ENCODE measurements at regions of chr5 and their contacts with region 1.

Region 1: DNA sequence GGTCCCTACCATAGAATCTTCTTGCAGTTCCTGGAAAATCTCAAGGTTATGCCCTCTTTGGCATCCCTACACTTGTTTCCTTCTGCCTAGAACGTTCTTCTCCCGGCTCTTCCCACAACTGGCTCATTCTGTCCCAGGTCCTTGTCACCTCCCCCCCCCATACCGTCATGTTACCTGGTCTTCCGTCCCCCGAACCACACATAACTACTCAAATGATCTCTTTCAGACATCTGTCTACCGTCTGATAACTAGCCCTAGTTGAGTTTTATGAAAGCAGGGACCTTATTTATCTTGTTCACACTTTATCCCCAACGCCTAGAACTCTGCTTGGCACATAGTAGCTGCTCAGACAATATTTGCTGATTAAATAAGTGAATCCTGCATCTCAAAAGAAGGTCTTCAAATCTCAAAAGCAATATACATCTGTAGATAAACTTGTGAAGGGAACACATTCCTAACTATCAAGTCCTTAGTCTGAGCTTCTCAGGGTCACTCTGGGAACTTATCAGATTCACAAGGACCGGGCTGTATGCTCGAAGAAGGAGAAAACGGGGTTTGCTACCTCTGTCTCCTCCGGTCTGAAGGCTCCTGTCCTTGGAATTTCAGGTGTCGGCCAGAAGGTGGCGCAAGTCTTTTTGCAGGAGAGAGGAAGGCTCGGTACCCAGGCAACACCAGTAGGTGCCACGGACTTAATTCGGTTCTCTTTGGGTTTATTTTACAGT is 30.0 kb downstream of the LCP2 start:
- DNase-seq: peak; percentile 34
- ATAC-seq: peak; percentile 99
- H3K4me3 ChIP-seq: no peak overlapping the region
- H3K27ac ChIP-seq: no peak overlapping the region; the same call in 1 of the 2 replicates
- H3K4me1 ChIP-seq: peaks cover 7% of the 10 kb centered on the region
- H3K27me3 ChIP-seq: no peaks in the 10 kb centered on the region
- CTCF ChIP-seq: peak; percentile 79 to 88 (median 84)
- EP300 ChIP-seq: no peak
- POLR2A ChIP-seq: no peak
- RAD21 ChIP-seq: peak; percentile 89

Region 2: GRCh38 chr5:170252720-170253350 is 14.8 kb before region 1 on chr5:
- CTCF ChIA-PET with region 1: interaction called, 21 read pairs
- POLR2A ChIA-PET with region 1: no interaction called
- RAD21 ChIA-PET with region 1: interaction called, 4 read pairs
- SMC1A ChIA-PET with region 1: interaction called, 11 read pairs
- in situ Hi-C with region 1: no loop called
- intact Hi-C with region 1: no loop called
- DNase-seq: no peak
- ATAC-seq: no peak
- H3K4me3 ChIP-seq: no peak overlapping the region
- H3K27ac ChIP-seq: no peak overlapping the region
- H3K4me1 ChIP-seq: no peaks in the 10 kb centered on the region
- H3K27me3 ChIP-seq: no peaks in the 10 kb centered on the region
- CTCF ChIP-seq: no peak
- EP300 ChIP-seq: no peak
- POLR2A ChIP-seq: no peak
- RAD21 ChIP-seq: no peak

Region 3: DNA sequence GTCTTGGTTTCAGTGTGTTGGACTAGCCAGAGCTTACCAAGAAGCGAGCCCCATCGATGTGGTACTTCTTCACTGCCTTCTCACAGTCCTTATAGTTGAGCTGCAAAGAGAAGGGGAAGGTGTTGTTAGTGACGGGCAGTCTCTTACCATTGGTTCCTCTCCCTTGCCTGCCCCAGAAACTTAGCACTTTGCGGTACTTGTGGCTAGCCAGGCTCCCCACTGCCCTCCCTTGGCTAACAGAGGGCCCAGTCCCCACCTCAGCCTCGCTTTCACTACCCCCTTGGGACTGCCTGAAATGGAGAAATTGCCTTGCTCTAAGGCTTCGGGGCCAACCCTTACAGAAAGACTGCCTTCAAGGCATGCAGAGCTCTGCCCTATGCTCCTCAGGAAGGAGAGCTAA is 25.7 kb after region 1 on chr5:
- CTCF ChIA-PET with region 1: interaction called, 85 read pairs
- POLR2A ChIA-PET with region 1: interaction called, 18 read pairs
- RAD21 ChIA-PET with region 1: interaction called, 182 read pairs
- SMC1A ChIA-PET with region 1: interaction called, 451 read pairs
- in situ Hi-C with region 1: no loop called
- intact Hi-C with region 1: no loop called
- DNase-seq: peak; percentile 87
- ATAC-seq: peak; percentile 86
- H3K4me3 ChIP-seq: peak overlapping the region; percentile 77
- H3K27ac ChIP-seq: no peak overlapping the region
- H3K4me1 ChIP-seq: peaks cover 15% of the 10 kb centered on the region
- H3K27me3 ChIP-seq: no peaks in the 10 kb centered on the region
- CTCF ChIP-seq: peak in 1 of 3 experiments; percentile 19; a peak in 1 of 6 replicates
- EP300 ChIP-seq: peak in 1 of 2 experiments; percentile 80; a peak in 2 of 4 replicates
- POLR2A ChIP-seq: no peak
- RAD21 ChIP-seq: peak; percentile 34; the same call in 1 of the 2 replicates

Region 4: DNA sequence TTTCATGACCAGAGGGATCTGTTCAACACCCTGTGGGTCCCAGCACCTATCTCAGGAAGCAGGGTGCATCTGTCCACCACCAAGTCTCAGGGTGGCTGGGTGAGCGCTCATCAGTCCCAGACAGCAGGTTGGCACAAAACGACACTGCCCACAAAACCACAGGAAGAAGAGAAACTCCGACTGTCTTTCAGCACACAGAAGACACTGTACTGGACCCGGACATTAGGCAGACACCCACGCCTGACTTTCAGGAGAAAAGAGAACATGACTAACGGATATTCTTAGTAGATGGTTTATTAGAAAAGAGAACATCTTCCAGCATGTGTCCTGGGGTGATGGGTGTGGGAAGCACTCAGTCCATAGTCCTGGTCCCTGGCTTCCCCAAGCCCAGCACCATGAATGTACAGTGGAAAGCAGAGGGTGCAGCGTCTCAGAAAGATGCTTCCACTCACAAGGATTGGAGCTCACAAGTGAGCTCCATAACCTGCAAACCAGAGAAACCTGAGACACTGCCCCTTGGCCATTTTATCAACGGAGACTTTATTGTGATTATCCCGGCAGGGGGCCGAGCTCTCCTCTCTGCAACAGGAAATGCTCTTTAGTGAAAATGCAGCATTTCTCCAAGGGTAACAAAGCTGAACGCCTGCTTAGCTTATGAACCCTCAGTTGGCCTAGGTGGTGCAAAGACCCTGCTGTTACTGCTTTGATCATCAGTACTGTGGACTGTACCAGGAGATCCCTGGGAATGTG is 65.7 kb after region 1 on chr5:
- CTCF ChIA-PET with region 1: interaction called, 189 read pairs
- POLR2A ChIA-PET with region 1: interaction called, 19 read pairs
- RAD21 ChIA-PET with region 1: interaction called, 88 read pairs
- SMC1A ChIA-PET with region 1: interaction called, 125 read pairs
- in situ Hi-C with region 1: no loop called
- intact Hi-C with region 1: no loop called
- DNase-seq: peak; percentile 79
- ATAC-seq: peak; percentile 54
- H3K4me3 ChIP-seq: no peak overlapping the region
- H3K27ac ChIP-seq: 0 out of 2 replicates have a peak overlapping the region, but pooled peaks have one; percentile 5
- H3K4me1 ChIP-seq: peaks cover 46% of the 10 kb centered on the region
- H3K27me3 ChIP-seq: no peaks in the 10 kb centered on the region
- CTCF ChIP-seq: no peak
- EP300 ChIP-seq: 0 out of 4 replicates have a peak, but pooled peaks of 1 of the 2 experiments have one; percentile 28
- POLR2A ChIP-seq: no peak
- RAD21 ChIP-seq: 0 out of 2 replicates have a peak, but pooled peaks have one; percentile 4

Region 5: GRCh38 chr5:170404402-170404801 is 136.8 kb after region 1 on chr5:
- CTCF ChIA-PET with region 1: interaction called, 11 read pairs
- POLR2A ChIA-PET with region 1: no interaction called
- RAD21 ChIA-PET with region 1: interaction called, 5 read pairs
- SMC1A ChIA-PET with region 1: interaction called, 3 read pairs
- in situ Hi-C with region 1: no loop called
- intact Hi-C with region 1: no loop called
- DNase-seq: no peak
- ATAC-seq: peak; percentile 81
- H3K4me3 ChIP-seq: no peak overlapping the region
- H3K27ac ChIP-seq: no peak overlapping the region
- H3K4me1 ChIP-seq: no peaks in the 10 kb centered on the region
- H3K27me3 ChIP-seq: no peaks in the 10 kb centered on the region; a peak in 2 of 4 replicates
- CTCF ChIP-seq: no peak
- EP300 ChIP-seq: no peak
- POLR2A ChIP-seq: no peak
- RAD21 ChIP-seq: no peak

Region 6: GRCh38 chr5:170429014-170429413 is 161.4 kb after region 1 on chr5:
- CTCF ChIA-PET with region 1: interaction called, 41 read pairs
- POLR2A ChIA-PET with region 1: no interaction called
- RAD21 ChIA-PET with region 1: interaction called, 6 read pairs
- SMC1A ChIA-PET with region 1: interaction called, 4 read pairs
- in situ Hi-C with region 1: no loop called
- intact Hi-C with region 1: no loop called
- DNase-seq: no peak
- ATAC-seq: no peak
- H3K4me3 ChIP-seq: no peak overlapping the region
- H3K27ac ChIP-seq: no peak overlapping the region
- H3K4me1 ChIP-seq: no peaks in the 10 kb centered on the region
- H3K27me3 ChIP-seq: peaks cover 0 to 2% of the 10 kb centered on the region in 2 experiments; a peak in 2 of 4 replicates
- CTCF ChIP-seq: no peak
- EP300 ChIP-seq: no peak
- POLR2A ChIP-seq: no peak
- RAD21 ChIP-seq: no peak

Measured in GM12878 (cell line).